Common myeloid progenitor, CD34-positive (primary cell): ENCODE measurements at regions of chr12 and their contacts with region 1.

Region 1: GRCh38 chr12:54251667-54252284 is 28.1 kb downstream of the CBX5 start:
- DNase-seq: peak; percentile 62 to 82 (median 79)
- H3K4me3 ChIP-seq: no peak overlapping the region
- H3K27ac ChIP-seq: no peak overlapping the region
- H3K4me1 ChIP-seq: no peaks in the 10 kb centered on the region
- H3K27me3 ChIP-seq: no peaks in the 10 kb centered on the region

Region 2: GRCh38 chr12:54240971-54241588 is 10.7 kb before region 1 on chr12:
- CTCF ChIA-PET with region 1: interaction called, 23 read pairs
- POLR2A ChIA-PET with region 1: no interaction called
- DNase-seq: no peak
- H3K4me3 ChIP-seq: no peak overlapping the region
- H3K27ac ChIP-seq: no peak overlapping the region
- H3K4me1 ChIP-seq: no peaks in the 10 kb centered on the region
- H3K27me3 ChIP-seq: no peaks in the 10 kb centered on the region

Region 3: GRCh38 chr12:54265364-54265812 is 13.6 kb after region 1 on chr12:
- CTCF ChIA-PET with region 1: interaction called, 26 read pairs
- POLR2A ChIA-PET with region 1: interaction called, 3 read pairs
- DNase-seq: no peak
- H3K4me3 ChIP-seq: no peak overlapping the region
- H3K27ac ChIP-seq: no peak overlapping the region
- H3K4me1 ChIP-seq: peaks cover 9 to 26% (median 18%) of the 10 kb centered on the region in 4 experiments
- H3K27me3 ChIP-seq: no peaks in the 10 kb centered on the region

Region 4: DNA sequence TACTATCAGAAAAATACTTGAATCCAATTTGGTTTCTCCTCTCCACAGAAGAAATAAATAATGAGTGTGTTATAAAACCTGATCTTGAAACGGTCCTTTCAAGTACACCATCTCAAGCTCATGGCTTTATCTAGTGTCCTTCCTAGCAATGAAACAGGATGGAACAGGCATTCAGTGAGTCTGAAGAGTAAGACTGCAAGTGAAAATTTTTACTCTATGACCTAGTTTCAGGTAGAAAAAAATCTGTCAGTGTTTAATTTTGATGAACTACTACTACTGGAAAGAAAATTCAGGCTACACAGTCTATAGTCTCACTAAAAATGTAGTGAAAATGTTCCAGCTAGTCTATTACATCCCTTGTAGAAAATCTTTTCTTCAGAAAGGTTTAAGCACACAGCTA is 20.4 kb after region 1 on chr12:
- CTCF ChIA-PET with region 1: interaction called, 10 read pairs
- POLR2A ChIA-PET with region 1: interaction called, 3 read pairs
- DNase-seq: no peak
- H3K4me3 ChIP-seq: no peak overlapping the region
- H3K27ac ChIP-seq: no peak overlapping the region
- H3K4me1 ChIP-seq: peaks cover 0 to 12% (median 5%) of the 10 kb centered on the region in 4 experiments
- H3K27me3 ChIP-seq: no peaks in the 10 kb centered on the region

Region 5: GRCh38 chr12:54285150-54286041 is 33.6 kb after region 1 on chr12:
- CTCF ChIA-PET with region 1: interaction called, 20 read pairs
- POLR2A ChIA-PET with region 1: interaction called, 5 read pairs
- DNase-seq: peak in 2 of 3 donors; percentile 50 to 55
- H3K4me3 ChIP-seq: peak overlapping the region in 5 of 7 experiments; percentile 26 to 68 (median 53)
- H3K27ac ChIP-seq: peak overlapping the region in 1 of 2 experiments; percentile 76
- H3K4me1 ChIP-seq: peaks cover 30 to 82% (median 66%) of the 10 kb centered on the region in 4 experiments
- H3K27me3 ChIP-seq: no peaks in the 10 kb centered on the region

Region 6: GRCh38 chr12:54294152-54294952 is 42.6 kb after region 1 on chr12:
- CTCF ChIA-PET with region 1: interaction called, 49 read pairs
- POLR2A ChIA-PET with region 1: interaction called, 3 read pairs
- DNase-seq: peak; percentile 64 to 76 (median 73)
- H3K4me3 ChIP-seq: peak overlapping the region in 5 of 7 experiments; percentile 40 to 86 (median 59)
- H3K27ac ChIP-seq: peak overlapping the region; percentile 22 to 95
- H3K4me1 ChIP-seq: peaks cover 24 to 93% (median 86%) of the 10 kb centered on the region in 4 experiments
- H3K27me3 ChIP-seq: no peaks in the 10 kb centered on the region